ENCODE measurements at regions of chr4 and their contacts with region 1.

Region 1: GRCh38 chr4:166165829-166166420 is 292.9 kb downstream of the TLL1 start:
- DNase-seq: peak; percentile 82
- ATAC-seq: peak; percentile 80
- H3K4me3 ChIP-seq: no peak overlapping the region
- H3K27ac ChIP-seq: no peak overlapping the region
- H3K4me1 ChIP-seq: no peaks in the 10 kb centered on the region; the same call in 1 of the 2 replicates
- H3K27me3 ChIP-seq: no peaks in the 10 kb centered on the region
- CTCF ChIP-seq: peak; percentile 75

Region 2: DNA sequence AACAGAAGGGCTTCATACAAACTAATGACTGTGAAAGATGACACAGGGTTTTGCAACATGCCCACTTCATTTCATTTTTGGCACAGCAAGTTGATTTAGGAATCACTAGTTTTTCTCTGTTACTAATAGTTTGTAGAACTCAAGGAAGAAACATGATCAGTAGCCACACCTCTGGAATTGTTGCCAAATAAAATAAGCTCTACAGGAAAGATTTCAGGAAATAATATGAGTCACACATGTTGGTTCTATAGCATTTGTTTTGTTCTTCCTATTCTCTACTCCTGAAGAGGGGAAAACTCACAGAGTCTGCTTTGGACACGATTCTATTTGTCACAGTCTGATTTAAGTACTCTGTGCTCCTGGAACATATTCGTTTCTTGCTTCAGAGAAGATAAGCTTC is 37.5 kb before region 1 on chr4:
- CTCF ChIA-PET with region 1: no interaction called
- POLR2A ChIA-PET with region 1: no interaction called
- intact Hi-C with region 1: no loop called
- DNase-seq: peak; percentile 67
- ATAC-seq: peak; percentile 78
- H3K4me3 ChIP-seq: no peak overlapping the region
- H3K27ac ChIP-seq: no peak overlapping the region
- H3K4me1 ChIP-seq: peaks cover 8% of the 10 kb centered on the region; the same call in 1 of the 2 replicates
- H3K27me3 ChIP-seq: no peaks in the 10 kb centered on the region
- CTCF ChIP-seq: no peak

Region 3: GRCh38 chr4:166252487-166253402 is 86.8 kb after region 1 on chr4:
- CTCF ChIA-PET with region 1: interaction called, 5 read pairs
- POLR2A ChIA-PET with region 1: no interaction called
- intact Hi-C with region 1: loop called (anchors 2 kb)
- DNase-seq: peak; percentile 51
- ATAC-seq: peak; percentile 45; the same call in 1 of the 2 replicates
- H3K4me3 ChIP-seq: no peak overlapping the region
- H3K27ac ChIP-seq: no peak overlapping the region
- H3K4me1 ChIP-seq: no peaks in the 10 kb centered on the region
- H3K27me3 ChIP-seq: no peaks in the 10 kb centered on the region
- CTCF ChIP-seq: peak; percentile 73

Region 4: DNA sequence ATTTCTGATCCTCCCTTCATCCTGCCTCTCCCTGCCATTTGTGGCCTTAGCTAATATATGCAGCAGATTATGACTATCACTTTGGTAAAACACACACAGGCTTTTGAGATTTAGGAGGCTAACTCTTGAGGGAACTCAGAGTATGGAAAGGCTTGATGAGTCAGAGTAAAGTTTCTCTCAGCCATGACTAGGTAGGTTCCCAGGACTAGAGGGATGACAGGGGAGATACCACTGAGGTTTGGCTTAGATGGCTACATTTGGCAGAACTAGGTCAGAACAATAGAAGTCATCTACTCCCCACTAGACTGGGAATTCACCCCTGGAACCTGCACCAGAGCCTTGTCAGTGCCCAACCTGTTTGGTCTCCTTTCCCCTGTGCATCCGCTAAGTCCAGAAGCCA is 292.8 kb after region 1 on chr4:
- CTCF ChIA-PET with region 1: no interaction called
- POLR2A ChIA-PET with region 1: no interaction called
- intact Hi-C with region 1: no loop called
- DNase-seq: peak; percentile 36
- ATAC-seq: no peak
- H3K4me3 ChIP-seq: no peak overlapping the region
- H3K27ac ChIP-seq: no peak overlapping the region
- H3K4me1 ChIP-seq: peaks cover 18% of the 10 kb centered on the region
- H3K27me3 ChIP-seq: no peaks in the 10 kb centered on the region
- CTCF ChIP-seq: no peak

Region 5: GRCh38 chr4:166493828-166494432 is 328.0 kb after region 1 on chr4:
- CTCF ChIA-PET with region 1: no interaction called
- POLR2A ChIA-PET with region 1: no interaction called
- intact Hi-C with region 1: loop called (anchors 10 kb)
- DNase-seq: peak; percentile 55
- ATAC-seq: peak; percentile 76
- H3K4me3 ChIP-seq: no peak overlapping the region
- H3K27ac ChIP-seq: no peak overlapping the region
- H3K4me1 ChIP-seq: peaks cover 6% of the 10 kb centered on the region
- H3K27me3 ChIP-seq: no peaks in the 10 kb centered on the region
- CTCF ChIP-seq: no peak

Region 6: GRCh38 chr4:166585491-166585890 is 419.6 kb after region 1 on chr4:
- CTCF ChIA-PET with region 1: no interaction called
- POLR2A ChIA-PET with region 1: no interaction called
- intact Hi-C with region 1: no loop called
- DNase-seq: peak; percentile 35
- ATAC-seq: no peak
- H3K4me3 ChIP-seq: no peak overlapping the region
- H3K27ac ChIP-seq: no peak overlapping the region
- H3K4me1 ChIP-seq: no peaks in the 10 kb centered on the region
- H3K27me3 ChIP-seq: no peaks in the 10 kb centered on the region
- CTCF ChIP-seq: no peak

Region 7: GRCh38 chr4:167014944-167015343 is 849.0 kb after region 1 on chr4:
- CTCF ChIA-PET with region 1: no interaction called
- POLR2A ChIA-PET with region 1: no interaction called
- intact Hi-C with region 1: loop called (anchors 2 kb)
- DNase-seq: no peak
- ATAC-seq: no peak
- H3K4me3 ChIP-seq: no peak overlapping the region
- H3K27ac ChIP-seq: no peak overlapping the region
- H3K4me1 ChIP-seq: no peaks in the 10 kb centered on the region
- H3K27me3 ChIP-seq: no peaks in the 10 kb centered on the region
- CTCF ChIP-seq: peak; percentile 32; the same call in 1 of the 2 replicates

Measured in PC-3 (cell line).